ENCODE measurements at regions of chr22 and their contacts with region 1.

Region 1: DNA sequence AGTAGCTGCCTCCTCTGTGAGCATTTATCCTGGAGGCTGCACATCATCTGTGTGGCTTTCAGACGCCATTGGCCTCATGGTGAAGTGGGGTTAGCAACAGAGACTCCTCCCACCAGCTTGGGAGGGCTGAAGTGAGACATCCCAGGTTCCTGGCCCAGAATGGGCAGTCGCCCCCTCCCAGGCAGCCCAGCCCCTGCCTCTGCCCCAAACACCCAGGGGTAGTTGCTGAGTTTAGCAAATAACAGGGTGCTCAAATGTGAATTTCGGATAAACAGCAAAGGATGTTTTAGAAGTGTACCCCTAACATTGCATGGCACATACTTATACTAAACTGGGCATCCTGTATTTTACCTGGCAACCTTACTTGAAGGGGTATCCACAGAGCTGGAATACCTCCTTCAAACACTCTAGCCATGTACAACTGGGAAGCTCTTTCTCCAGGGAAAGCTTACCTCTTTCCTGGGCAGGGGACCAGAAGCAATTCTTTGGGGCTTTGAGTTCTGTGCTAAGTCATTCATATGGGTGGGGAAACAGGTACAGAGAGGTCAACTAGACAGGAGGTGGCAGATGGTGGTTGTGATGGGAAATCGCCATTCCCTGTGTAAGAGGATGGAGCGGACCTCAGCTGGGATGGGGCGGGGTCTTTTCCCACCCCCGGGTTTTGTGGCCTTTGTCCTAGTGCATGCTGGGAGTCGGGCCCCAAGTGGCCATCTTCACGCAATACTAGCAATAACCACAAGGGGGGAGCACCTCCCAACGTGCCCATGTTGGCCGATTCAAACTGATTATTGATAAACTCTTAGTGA is 19.3 kb downstream of the MTFP1 start:
- DNase-seq: no peak
- ATAC-seq: peak; percentile 80
- H3K4me3 ChIP-seq: peak overlapping the region in 1 of 2 experiments; percentile 18; a peak in 1 of 4 replicates
- H3K27ac ChIP-seq: no peak overlapping the region
- H3K4me1 ChIP-seq: no peaks in the 10 kb centered on the region
- H3K27me3 ChIP-seq: no peaks in the 10 kb centered on the region
- CTCF ChIP-seq: peak; percentile 83

Region 2: DNA sequence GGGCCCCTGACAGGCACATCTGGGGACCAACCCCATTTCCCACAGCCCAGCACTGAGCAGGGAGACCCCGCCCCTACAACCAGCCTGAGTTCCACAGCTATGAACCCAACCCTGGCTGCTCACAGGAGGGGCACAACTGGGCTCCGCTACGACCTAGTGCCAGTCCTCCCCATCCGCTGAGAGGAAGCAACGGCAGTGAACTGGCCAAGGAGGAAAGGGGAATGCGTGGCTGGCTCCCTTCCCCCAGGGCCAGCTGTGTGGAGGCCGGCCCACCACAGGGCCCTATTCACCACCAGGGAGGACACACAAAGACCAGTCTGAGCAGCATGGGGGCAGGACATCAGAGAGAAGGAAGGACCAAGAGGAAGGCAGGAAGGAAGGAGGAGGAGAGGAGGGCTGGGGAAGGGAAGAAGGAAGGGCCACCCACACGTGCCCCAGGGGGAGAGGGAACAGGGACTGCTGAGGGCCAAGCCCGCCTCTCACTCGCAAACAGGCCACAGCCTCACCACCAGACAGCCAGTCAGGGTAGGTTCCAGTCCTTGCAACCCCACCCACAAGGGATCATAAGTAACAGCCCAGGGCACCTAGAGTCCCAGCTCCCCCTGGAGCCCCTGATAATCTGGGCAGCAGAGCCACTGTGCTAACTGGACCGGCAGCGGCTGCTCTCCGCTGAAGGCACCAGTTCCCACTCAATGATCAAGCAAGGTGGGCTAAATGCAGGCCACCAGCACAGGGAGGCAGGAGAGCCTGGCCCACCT is 138.1 kb after region 1 on chr22:
- CTCF ChIA-PET with region 1: no interaction called
- POLR2A ChIA-PET with region 1: interaction called, 13 read pairs
- in situ Hi-C with region 1: no loop called
- intact Hi-C with region 1: no loop called
- DNase-seq: no peak
- ATAC-seq: no peak
- H3K4me3 ChIP-seq: no peak overlapping the region
- H3K27ac ChIP-seq: no peak overlapping the region
- H3K4me1 ChIP-seq: no peaks in the 10 kb centered on the region
- H3K27me3 ChIP-seq: no peaks in the 10 kb centered on the region
- CTCF ChIP-seq: no peak

Measured in Panc1 (cell line).